Dorsolateral prefrontal cortex (tissue), 120 donors: ENCODE measurements at regions of chr1 and their contacts with region 1.

Region 1: DNA sequence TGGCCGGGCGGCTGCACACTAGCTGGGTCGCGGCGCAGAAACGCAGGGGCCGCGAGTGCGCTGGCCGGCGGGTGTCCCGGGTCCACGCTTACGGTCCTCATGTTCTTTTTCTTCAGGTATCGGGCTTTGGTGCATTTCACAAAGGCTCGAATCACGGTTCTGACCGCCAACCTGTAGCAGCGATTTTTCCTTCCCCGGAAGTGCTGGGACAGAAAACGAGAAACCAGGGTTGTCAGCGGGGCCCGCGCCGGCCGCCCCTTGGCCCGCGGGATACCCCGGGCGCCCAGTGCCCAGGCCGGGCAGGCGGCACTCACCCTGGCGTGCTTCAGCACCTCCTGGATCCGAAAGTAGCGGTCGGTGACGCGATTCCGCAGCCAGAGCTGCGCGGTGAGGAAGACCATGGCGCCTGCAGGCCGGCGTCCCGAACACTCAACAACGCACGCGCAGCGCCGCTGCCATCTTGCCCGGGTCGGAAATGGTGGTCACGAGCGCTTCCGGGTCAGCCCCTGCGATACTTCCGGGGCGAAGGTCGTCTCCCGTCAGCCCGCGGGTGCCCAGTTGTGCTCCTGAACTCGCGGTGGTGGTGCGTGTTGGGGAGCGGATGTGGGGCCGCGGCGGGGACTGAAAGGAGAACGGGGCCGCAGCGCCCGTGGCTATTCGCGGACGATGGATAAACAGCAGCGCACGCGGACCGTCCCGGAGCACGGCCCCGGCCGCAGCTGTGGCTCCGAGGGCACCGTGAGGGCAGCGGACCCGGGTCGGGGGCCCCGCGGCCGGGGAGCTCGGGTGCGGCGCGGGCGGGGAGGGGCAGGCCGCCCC is at the start of gene MRPL20:
- DNase-seq: peak; percentile 89 to 96 (median 94)
- H3K4me3 ChIP-seq: peak within 1 kb of the TSS; percentile 50 to 100 (median 95)
- H3K27ac ChIP-seq: peak within 1 kb of the TSS in 58 of 59 donors; percentile 0 to 94 (median 83)
- H3K27me3 ChIP-seq: no peaks in the 10 kb centered on the region
- CTCF ChIP-seq: peak in 36 of 56 donors; percentile 5 to 62 (median 30)
- total RNA-seq, gene MRPL20: 56.0 to 114 (median 86.3) TPM

Region 2: GRCh38 chr1:820962-821361 is 586.1 kb before region 1 on chr1:
- intact Hi-C with region 1: no loop called
- DNase-seq: no peak
- H3K4me3 ChIP-seq: no peak overlapping the region
- H3K27ac ChIP-seq: no peak overlapping the region
- H3K27me3 ChIP-seq: no peaks in the 10 kb centered on the region
- CTCF ChIP-seq: no peak

Region 3: GRCh38 chr1:1091663-1092478 is 315.2 kb before region 1 on chr1:
- intact Hi-C with region 1: no loop called
- DNase-seq: peak in 4 of 10 donors; percentile 15 to 37 (median 30)
- H3K4me3 ChIP-seq: no peak overlapping the region
- H3K27ac ChIP-seq: no peak overlapping the region
- H3K27me3 ChIP-seq: no peaks in the 10 kb centered on the region
- CTCF ChIP-seq: no peak

Region 4: DNA sequence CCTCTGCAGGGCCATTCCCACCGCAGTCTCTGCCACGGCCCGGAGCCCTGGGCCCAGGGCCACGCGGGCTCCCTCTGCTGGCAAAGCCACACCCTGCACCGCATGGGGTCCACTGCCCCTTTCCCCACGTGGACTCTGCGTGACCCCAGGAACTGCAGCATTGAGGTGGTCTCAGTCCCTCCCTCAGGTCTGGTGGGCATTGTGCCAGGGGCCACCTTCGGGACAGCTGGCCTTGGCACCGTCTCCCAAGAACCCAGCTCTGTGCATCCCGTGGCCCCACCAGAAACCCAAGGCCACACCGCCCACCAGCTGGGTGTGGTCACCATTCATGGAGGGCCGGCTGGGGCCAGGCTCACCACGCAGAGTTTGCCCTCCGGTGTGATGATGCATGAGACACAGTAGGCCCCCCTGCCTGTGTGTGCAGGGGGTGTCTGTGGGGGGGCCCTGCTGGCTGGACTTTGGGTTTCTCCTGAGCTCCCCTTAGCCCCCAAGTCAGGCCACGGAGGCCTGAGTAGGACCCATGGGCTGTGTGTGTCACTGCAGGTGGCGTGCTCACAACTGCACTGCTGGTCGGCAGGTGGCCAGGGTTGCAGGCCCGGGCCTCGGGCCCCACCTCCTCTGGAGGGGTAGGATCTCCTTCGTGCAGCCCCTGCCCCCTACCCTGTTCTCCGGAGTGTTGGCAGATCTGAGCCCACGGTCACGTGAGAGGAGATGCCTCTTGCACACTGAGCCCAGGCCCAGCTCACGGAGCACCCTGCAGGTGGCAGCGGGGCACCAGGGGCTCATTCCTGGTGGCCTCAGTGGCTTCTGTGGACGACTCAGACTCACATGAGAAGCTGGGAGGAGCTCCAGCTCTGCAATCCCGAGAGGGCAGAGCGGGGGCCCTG is 34.2 kb after region 1 on chr1:
- intact Hi-C with region 1: loop called (anchors 5 kb)
- DNase-seq: peak in 3 of 10 donors; percentile 53 to 73 (median 54)
- H3K4me3 ChIP-seq: peak overlapping the region in 7 of 59 donors; percentile 1 to 32 (median 9)
- H3K27ac ChIP-seq: peak overlapping the region in 49 of 59 donors; percentile 23 to 83 (median 63)
- H3K27me3 ChIP-seq: no peaks in the 10 kb centered on the region
- CTCF ChIP-seq: peak; percentile 61 to 94 (median 84)

Region 5: DNA sequence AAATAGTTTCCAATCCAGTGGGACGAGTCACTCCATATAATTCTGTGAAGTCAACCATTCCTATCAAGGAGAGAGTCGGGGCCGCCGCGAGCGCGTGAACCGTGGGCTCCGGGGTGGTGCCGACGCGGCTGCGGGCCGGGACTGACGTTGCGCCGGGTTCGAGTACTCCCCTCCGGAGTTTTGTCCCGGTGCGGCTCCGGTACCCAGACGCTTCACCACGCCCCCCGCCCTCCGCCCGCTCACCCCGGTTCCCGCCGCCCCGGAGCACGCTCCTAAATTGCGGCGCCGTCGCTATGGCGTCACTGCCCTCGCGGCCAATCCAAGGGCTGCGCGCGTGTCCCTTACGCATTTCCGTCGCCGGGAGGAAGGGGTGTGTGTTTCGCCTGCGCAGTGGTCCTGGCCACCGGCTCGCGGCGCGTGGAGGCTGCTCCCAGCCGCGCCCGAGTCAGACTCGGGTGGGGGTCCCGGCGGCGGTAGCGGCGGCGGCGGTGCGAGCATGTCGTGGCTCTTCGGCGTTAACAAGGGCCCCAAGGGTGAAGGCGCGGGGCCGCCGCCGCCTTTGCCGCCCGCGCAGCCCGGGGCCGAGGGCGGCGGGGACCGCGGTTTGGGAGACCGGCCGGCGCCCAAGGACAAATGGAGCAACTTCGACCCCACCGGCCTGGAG is 64.5 kb after region 1 on chr1 and contains the start of gene ATAD3B:
- intact Hi-C with region 1: loop called in 1 of 2 experiments (anchors 2 kb)
- DNase-seq: peak; percentile 85 to 97 (median 94)
- H3K4me3 ChIP-seq: peak within 1 kb of the TSS; percentile 52 to 99 (median 82)
- H3K27ac ChIP-seq: peak within 1 kb of the TSS in 57 of 59 donors; percentile 25 to 93 (median 80)
- H3K27me3 ChIP-seq: no peaks in the 10 kb centered on the region
- CTCF ChIP-seq: peak in 13 of 56 donors; percentile 7 to 32 (median 21)
- total RNA-seq, gene ATAD3B: 9.5 to 47.1 (median 24.6) TPM